Activated T-helper 1 cell treated with anti-CD3 and anti-CD28 coated beads, Interleukin-12 subunit alpha, Interleukin-12 subunit beta, Interleukin-2, Interleukin-4 antibody, amounts not matched to agents 30 ng/mL and 10 ng/mL and 1 ng/mL, durations not matched to agents 14 hours and 24 hours and 36 hours (primary cell): ENCODE measurements at regions of chr1 and their contacts with region 1.

Region 1: GRCh38 chr1:225428068-225428880 is 436 bp upstream of the LBR start:
- DNase-seq: peak; percentile 94
- H3K4me3 Mint-ChIP-seq: peak overlapping the region; percentile 83
- H3K27ac Mint-ChIP-seq: peak overlapping the region; percentile 90
- H3K4me1 Mint-ChIP-seq: peaks cover 56% of the 10 kb centered on the region
- H3K27me3 Mint-ChIP-seq: no peaks in the 10 kb centered on the region

Region 2: GRCh38 chr1:225441314-225442122 is 13.2 kb after region 1 on chr1:
- intact Hi-C with region 1: loop called (anchors 1 kb)
- DNase-seq: no peak
- H3K4me3 Mint-ChIP-seq: peak overlapping the region; percentile 55
- H3K27ac Mint-ChIP-seq: peak overlapping the region; percentile 76
- H3K4me1 Mint-ChIP-seq: peaks cover 51% of the 10 kb centered on the region
- H3K27me3 Mint-ChIP-seq: peaks cover 2% of the 10 kb centered on the region

Region 3: GRCh38 chr1:225467193-225468020 is 39.1 kb after region 1 on chr1:
- intact Hi-C with region 1: loop called (anchors 1 kb)
- DNase-seq: peak; percentile 80
- H3K4me3 Mint-ChIP-seq: peak overlapping the region; percentile 92
- H3K27ac Mint-ChIP-seq: peak overlapping the region; percentile 95
- H3K4me1 Mint-ChIP-seq: peaks cover 45% of the 10 kb centered on the region
- H3K27me3 Mint-ChIP-seq: no peaks in the 10 kb centered on the region